Gastrocnemius medialis (tissue), 4 donors: ENCODE measurements at regions of chr20 and their contacts with region 1.

Region 1: DNA sequence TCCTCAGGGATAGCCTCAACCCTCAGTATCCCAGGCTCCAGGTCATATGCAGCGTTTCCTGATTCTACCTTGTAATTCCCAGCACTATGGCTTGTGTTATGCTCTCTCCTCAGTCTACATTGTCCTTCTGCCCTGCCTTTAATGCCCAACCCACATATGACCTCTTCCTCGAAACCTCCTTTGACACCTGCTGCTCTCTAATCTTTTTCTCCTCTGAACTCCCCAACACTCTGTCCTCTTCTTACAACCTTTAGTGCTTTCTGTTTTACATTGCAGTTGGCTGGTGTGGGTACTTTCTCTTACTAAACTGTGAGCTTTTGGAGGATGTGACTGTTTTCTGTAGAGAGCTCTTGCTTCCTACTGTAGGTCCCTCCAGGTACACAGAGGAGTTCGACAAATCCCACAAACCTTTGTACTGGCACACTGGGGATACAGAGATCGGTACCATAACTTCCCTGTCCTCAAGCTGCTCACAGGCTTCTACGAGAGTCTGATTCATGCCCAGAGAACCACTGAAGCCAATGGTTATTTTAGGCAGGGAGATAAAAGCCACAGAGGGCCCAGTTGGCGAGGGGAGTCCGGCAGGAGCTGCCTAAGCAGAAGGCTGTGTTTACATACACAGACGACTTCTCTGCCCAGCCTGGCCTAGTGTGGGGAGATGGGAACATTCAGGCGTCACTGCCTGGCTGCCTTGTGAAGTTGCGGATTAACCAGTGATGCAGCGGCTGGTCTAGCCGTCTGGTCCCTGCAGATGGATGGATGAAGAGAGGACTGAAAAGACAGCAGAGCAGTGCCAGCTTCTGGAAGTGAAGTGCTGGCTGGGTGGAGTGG is 8.4 kb upstream of the EPB41L1 start:
- DNase-seq: peak; percentile 54 to 70
- ATAC-seq: peak; percentile 58 to 65
- H3K4me3 ChIP-seq: peak overlapping the region in 2 of 4 donors; percentile 26 to 34
- H3K27ac ChIP-seq: peak overlapping the region; percentile 71 to 86 (median 80)
- H3K4me1 ChIP-seq: peaks cover 22 to 54% of the 10 kb centered on the region in 2 donors
- H3K27me3 ChIP-seq: no peaks in the 10 kb centered on the region
- CTCF ChIP-seq: no peak
- POLR2A ChIP-seq: peak; percentile 48 to 65

Region 2: GRCh38 chr20:35463455-35464300 is 682.4 kb before region 1 on chr20:
- in situ Hi-C with region 1: no loop called
- intact Hi-C with region 1: loop called (anchors 10 kb)
- DNase-seq: peak; percentile 14 to 35
- ATAC-seq: peak; percentile 69 to 72
- H3K4me3 ChIP-seq: no peak overlapping the region
- H3K27ac ChIP-seq: peak overlapping the region in 1 of 4 donors; percentile 19
- H3K4me1 ChIP-seq: peaks cover 13 to 25% of the 10 kb centered on the region in 2 donors
- H3K27me3 ChIP-seq: no peaks in the 10 kb centered on the region
- CTCF ChIP-seq: peak; percentile 60 to 77 (median 72)
- POLR2A ChIP-seq: no peak

Region 3: GRCh38 chr20:35994994-35995453 is 151.1 kb before region 1 on chr20:
- in situ Hi-C with region 1: loop called in 1 of 4 experiments (anchors 5 kb)
- intact Hi-C with region 1: no loop called
- DNase-seq: peak; percentile 46 to 65
- ATAC-seq: peak; percentile 82 to 94
- H3K4me3 ChIP-seq: no peak overlapping the region
- H3K27ac ChIP-seq: no peak overlapping the region
- H3K4me1 ChIP-seq: peaks cover 6 to 10% of the 10 kb centered on the region in 2 donors
- H3K27me3 ChIP-seq: no peaks in the 10 kb centered on the region
- CTCF ChIP-seq: peak; percentile 76 to 87 (median 83)
- POLR2A ChIP-seq: no peak

Region 4: GRCh38 chr20:36050436-36051317 is 95.4 kb before region 1 on chr20:
- in situ Hi-C with region 1: no loop called
- intact Hi-C with region 1: loop called (anchors 5 kb)
- DNase-seq: peak; percentile 82 to 89
- ATAC-seq: peak; percentile 98
- H3K4me3 ChIP-seq: peak overlapping the region; percentile 95 to 100 (median 98)
- H3K27ac ChIP-seq: peak overlapping the region; percentile 96 to 100 (median 98)
- H3K4me1 ChIP-seq: peaks cover 21 to 28% of the 10 kb centered on the region in 2 donors
- H3K27me3 ChIP-seq: no peaks in the 10 kb centered on the region
- CTCF ChIP-seq: no peak
- POLR2A ChIP-seq: peak; percentile 97 to 99

Region 5: DNA sequence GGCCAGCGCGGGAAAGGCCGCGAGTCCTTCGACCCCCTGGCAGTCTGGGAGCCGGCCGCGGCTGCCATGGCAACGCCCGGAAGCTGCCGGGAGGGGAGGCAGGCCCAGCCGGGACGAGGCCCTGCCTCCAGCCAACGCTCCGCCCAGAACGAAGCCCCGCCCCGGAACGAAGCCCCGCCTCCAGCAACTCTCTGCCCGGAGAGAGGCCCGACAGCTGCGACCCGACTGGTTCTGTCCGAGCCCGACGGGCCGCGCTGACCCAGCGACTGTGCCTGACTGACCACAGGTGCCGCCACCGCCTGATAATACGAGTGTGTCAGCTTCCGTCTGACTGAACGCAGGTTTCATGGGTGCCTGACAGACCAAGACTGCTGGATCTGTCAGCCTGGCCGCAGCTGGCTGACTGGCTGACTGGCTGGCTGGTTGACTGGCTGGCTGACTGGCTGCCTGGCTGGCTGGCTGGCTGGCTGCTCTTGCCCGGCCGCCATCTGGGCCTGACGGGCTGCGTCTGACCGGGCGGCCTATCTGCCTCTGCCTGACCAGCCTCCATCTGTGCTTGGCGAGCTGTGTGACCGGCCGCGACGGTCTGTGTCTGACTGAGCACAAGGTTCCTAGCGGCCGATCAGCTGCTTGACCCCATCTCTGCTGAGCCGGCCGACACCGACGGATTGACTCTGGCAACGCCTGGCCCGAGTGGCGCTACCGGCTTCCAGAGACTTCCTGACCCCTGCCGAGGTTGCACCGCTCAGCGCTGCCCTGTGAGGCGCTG is 81.2 kb before region 1 on chr20:
- in situ Hi-C with region 1: no loop called
- intact Hi-C with region 1: loop called (anchors 5 kb)
- DNase-seq: peak; percentile 87 to 93
- ATAC-seq: peak; percentile 95 to 97
- H3K4me3 ChIP-seq: peak overlapping the region; percentile 65 to 95 (median 68)
- H3K27ac ChIP-seq: peak overlapping the region; percentile 89 to 91 (median 91)
- H3K4me1 ChIP-seq: no peaks in the 10 kb centered on the region
- H3K27me3 ChIP-seq: no peaks in the 10 kb centered on the region
- CTCF ChIP-seq: peak in 1 of 5 experiments; percentile 16
- POLR2A ChIP-seq: peak; percentile 75 to 87